CD8-positive, alpha-beta memory T cell (primary cell): ENCODE measurements at regions of chr13 and their contacts with region 1.

Region 1: DNA sequence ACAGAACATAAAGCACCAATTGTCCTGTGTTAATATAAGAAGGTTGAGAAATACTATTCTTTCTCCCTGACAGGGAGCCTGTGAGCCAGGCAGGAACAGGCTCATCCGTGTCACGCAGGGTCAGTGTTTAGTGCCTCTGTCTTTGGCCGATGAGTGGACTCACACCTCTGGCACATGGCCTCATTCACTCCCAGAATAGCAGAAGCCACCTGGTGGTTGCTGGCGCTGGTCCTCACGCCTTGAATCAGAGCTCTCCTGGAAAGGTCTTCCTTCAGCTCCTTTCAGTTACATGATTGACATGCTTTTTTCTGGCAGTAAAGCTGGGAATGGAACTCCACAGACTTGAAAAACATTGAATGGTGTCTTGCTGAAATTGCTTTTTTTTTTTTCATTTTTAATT is 28.1 kb upstream of the SIAH3 start:
- DNase-seq: no peak
- H3K4me3 ChIP-seq: no peak overlapping the region
- H3K4me3 Mint-ChIP-seq: no peak overlapping the region
- H3K27ac ChIP-seq: no peak overlapping the region
- H3K27ac Mint-ChIP-seq: no peak overlapping the region
- H3K4me1 ChIP-seq: no peaks in the 10 kb centered on the region
- H3K4me1 Mint-ChIP-seq: no peaks in the 10 kb centered on the region
- H3K27me3 ChIP-seq: no peaks in the 10 kb centered on the region
- H3K27me3 Mint-ChIP-seq: peaks cover 4 to 11% of the 10 kb centered on the region in 2 donors

Region 2: DNA sequence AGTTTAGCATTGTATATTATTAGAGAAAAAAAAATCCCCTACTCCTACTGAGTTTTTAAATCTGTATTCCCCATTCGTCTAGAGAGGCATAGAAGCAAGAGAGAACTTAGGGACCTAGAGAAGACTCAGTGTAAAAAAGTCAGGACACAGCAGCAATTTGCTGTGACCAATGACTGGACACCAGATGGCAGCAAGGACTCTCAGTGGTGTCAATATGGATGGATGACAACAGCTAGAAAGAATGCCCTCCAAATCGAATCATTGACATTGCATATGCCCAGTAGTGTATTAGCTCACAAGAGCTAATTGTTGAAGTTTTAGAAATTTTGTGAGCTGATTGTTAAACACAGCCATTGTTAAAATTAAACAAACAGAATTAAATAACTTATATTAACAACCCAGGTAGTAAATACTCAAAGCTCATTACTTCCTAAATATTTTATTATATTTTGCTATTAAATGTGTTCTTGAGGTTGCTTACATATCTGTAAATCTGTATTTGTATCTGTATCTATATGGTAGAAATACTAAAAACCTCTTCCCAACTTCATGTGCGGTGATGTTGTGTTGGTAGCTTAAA is 72.1 kb before region 1 on chr13:
- CTCF ChIA-PET with region 1: interaction called, 10 read pairs
- POLR2A ChIA-PET with region 1: no interaction called
- DNase-seq: peak in 2 of 5 donors; percentile 9 to 49
- H3K4me3 ChIP-seq: no peak overlapping the region
- H3K4me3 Mint-ChIP-seq: no peak overlapping the region
- H3K27ac ChIP-seq: no peak overlapping the region
- H3K27ac Mint-ChIP-seq: no peak overlapping the region
- H3K4me1 ChIP-seq: no peaks in the 10 kb centered on the region
- H3K4me1 Mint-ChIP-seq: peaks cover 4 to 15% (median 11%) of the 10 kb centered on the region in 3 donors
- H3K27me3 ChIP-seq: no peaks in the 10 kb centered on the region
- H3K27me3 Mint-ChIP-seq: peaks cover 0 to 7% of the 10 kb centered on the region in 2 donors